Naive thymus-derived CD4-positive, alpha-beta T cell (primary cell): ENCODE measurements at regions of chr17 and their contacts with region 1.

Region 1: DNA sequence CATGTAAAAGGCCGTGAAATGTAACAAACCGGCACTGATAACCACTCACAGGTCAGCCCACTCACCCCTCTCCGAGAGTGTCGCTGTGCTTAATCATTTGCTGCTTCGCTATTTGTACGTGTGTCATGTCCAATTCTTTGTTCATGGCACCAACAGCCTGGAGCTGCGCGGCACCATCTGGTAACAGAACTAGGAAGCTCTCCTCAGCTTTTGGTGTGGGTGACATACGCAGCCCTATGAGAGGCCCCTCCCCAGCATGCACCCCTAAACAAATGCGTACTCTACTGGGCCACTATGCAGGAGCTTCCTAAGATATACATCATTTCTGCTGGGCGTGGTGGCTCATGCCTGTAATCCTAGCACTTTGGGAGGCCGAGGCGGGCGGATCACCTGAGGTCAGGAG is 2.3 kb upstream of the PECAM1 start:
- DNase-seq: peak in 7 of 9 donors; percentile 29 to 63 (median 48)
- ATAC-seq: peak; percentile 67
- H3K4me3 ChIP-seq: peak overlapping the region; percentile 42
- H3K4me3 Mint-ChIP-seq: peak overlapping the region; percentile 43 to 94 (median 83)
- H3K27ac ChIP-seq: peak overlapping the region; percentile 80
- H3K27ac Mint-ChIP-seq: peak overlapping the region; percentile 56 to 98 (median 94)
- H3K4me1 ChIP-seq: peaks cover 14 to 31% of the 10 kb centered on the region in 2 donors
- H3K4me1 Mint-ChIP-seq: peaks cover 33 to 83% (median 61%) of the 10 kb centered on the region in 7 donors
- H3K27me3 ChIP-seq: no peaks in the 10 kb centered on the region
- H3K27me3 Mint-ChIP-seq: peaks cover 0 to 2% (median 0%) of the 10 kb centered on the region in 5 donors

Region 2: DNA sequence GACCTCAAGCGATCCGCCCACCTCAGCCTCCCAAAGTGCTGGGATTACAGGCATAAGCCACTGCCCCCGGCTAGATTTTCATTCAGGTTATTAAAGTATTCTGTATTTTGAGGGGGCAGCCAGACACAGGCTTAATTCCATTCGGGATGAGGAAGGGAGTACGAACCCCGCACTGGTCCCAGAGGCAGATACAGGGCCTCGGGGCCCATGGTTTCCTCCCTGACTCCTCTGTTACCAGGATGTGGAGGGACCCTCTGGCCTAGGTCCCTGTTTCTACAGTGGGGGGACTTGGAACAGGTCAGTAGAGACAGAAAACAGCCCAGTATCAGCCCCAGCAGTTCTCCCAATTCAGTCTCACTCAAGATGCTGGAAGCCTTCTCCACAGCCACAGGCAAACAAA is 44.3 kb before region 1 on chr17:
- CTCF ChIA-PET with region 1: interaction called, 4 read pairs
- POLR2A ChIA-PET with region 1: interaction called, 9 read pairs
- intact Hi-C with region 1: loop called in 1 of 2 experiments (anchors 1 kb)
- DNase-seq: no peak
- ATAC-seq: no peak
- H3K4me3 ChIP-seq: no peak overlapping the region
- H3K4me3 Mint-ChIP-seq: peak overlapping the region in 6 of 10 donors; percentile 21 to 86 (median 73)
- H3K27ac ChIP-seq: peak overlapping the region; percentile 62
- H3K27ac Mint-ChIP-seq: peak overlapping the region in 8 of 9 donors; percentile 90 to 99 (median 95)
- H3K4me1 ChIP-seq: peaks cover 7 to 36% of the 10 kb centered on the region in 2 donors
- H3K4me1 Mint-ChIP-seq: peaks cover 19 to 58% (median 36%) of the 10 kb centered on the region in 7 donors
- H3K27me3 ChIP-seq: no peaks in the 10 kb centered on the region
- H3K27me3 Mint-ChIP-seq: peaks cover 0 to 2% (median 0%) of the 10 kb centered on the region in 5 donors